PC-3 (cell line): ENCODE measurements at regions of chr17 and their contacts with region 1.

Region 1: GRCh38 chr17:50094753-50095619 is at the start of gene PDK2:
- DNase-seq: peak; percentile 99
- ATAC-seq: peak; percentile 82
- H3K4me3 ChIP-seq: peak within 1 kb of the TSS; percentile 88
- H3K27ac ChIP-seq: peak within 1 kb of the TSS; percentile 20
- H3K4me1 ChIP-seq: peaks cover 14% of the 10 kb centered on the region
- H3K27me3 ChIP-seq: no peaks in the 10 kb centered on the region
- CTCF ChIP-seq: no peak
- total RNA-seq, gene PDK2: 31.9 and 37.6 TPM in 2 replicates

Region 2: GRCh38 chr17:49763735-49764558 is 331.0 kb before region 1 on chr17 and contains the start of gene FAM117A:
- CTCF ChIA-PET with region 1: no interaction called
- POLR2A ChIA-PET with region 1: no interaction called
- intact Hi-C with region 1: no loop called
- DNase-seq: peak; percentile 100
- ATAC-seq: peak; percentile 96
- H3K4me3 ChIP-seq: peak within 1 kb of the TSS; percentile 76
- H3K27ac ChIP-seq: no peak within 1 kb of the TSS
- H3K4me1 ChIP-seq: peaks cover 24% of the 10 kb centered on the region
- H3K27me3 ChIP-seq: 0 out of 2 replicates have a peak, but pooled peaks cover 6% of the 10 kb centered on the region
- CTCF ChIP-seq: no peak
- total RNA-seq, gene FAM117A: 9.7 and 16.3 TPM in 2 replicates

Region 3: DNA sequence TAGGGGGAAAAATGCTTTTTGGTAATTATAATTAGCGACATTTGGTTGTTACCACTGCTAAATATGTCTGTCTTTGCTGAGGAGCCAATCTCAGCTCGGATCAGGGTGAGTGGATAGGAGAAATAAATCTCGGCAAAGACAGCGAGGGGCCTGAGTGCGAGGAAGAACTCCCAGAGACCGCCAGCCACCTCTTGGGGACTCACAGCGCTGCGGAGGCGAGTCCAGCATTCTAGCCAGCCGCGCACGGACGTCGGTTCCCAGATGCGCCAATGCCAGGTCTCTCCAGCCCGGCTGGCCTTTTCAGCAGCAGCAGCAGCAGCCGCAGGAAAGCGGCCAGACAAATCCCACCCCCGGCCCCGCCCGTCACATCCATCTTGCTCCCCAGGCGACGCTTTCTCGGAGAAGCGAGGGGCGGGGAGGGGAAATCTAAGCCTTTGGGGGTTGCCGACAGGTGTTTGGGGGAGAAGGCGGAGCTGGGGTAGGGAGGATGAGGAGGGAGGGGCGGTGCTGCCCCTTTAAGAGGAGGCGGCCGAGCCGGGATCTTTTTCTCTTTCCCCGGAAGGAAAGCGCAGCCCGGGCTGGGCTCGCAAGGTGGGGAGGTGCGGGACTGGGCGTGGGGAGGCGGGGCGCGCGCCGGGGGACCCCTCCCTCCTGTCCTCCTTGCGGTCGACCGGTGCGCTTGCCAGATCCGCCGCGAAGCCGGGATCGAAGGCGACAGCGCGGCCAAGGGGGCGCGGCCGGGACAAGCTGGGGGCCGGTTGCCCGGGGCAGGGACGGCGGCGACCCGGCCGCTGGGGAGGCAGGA is 39.4 kb before region 1 on chr17 and contains the start of gene ITGA3:
- CTCF ChIA-PET with region 1: interaction called, 8 read pairs
- POLR2A ChIA-PET with region 1: interaction called, 4 read pairs
- intact Hi-C with region 1: loop called (anchors 2 kb)
- DNase-seq: peak; percentile 98
- ATAC-seq: peak; percentile 36
- H3K4me3 ChIP-seq: peak within 1 kb of the TSS; percentile 90
- H3K27ac ChIP-seq: peak within 1 kb of the TSS; percentile 96
- H3K4me1 ChIP-seq: peaks cover 79% of the 10 kb centered on the region
- H3K27me3 ChIP-seq: no peaks in the 10 kb centered on the region
- CTCF ChIP-seq: no peak
- total RNA-seq, gene ITGA3: 598 and 763 TPM in 2 replicates

Region 4: GRCh38 chr17:50139950-50140871 is 45.2 kb after region 1 on chr17:
- CTCF ChIA-PET with region 1: no interaction called
- POLR2A ChIA-PET with region 1: interaction called, 24 read pairs
- intact Hi-C with region 1: no loop called
- DNase-seq: peak; percentile 68
- ATAC-seq: peak; percentile 84
- H3K4me3 ChIP-seq: no peak overlapping the region
- H3K27ac ChIP-seq: no peak overlapping the region
- H3K4me1 ChIP-seq: no peaks in the 10 kb centered on the region
- H3K27me3 ChIP-seq: no peaks in the 10 kb centered on the region
- CTCF ChIP-seq: peak; percentile 96

Region 5: GRCh38 chr17:50161023-50161910 is 66.3 kb after region 1 on chr17:
- CTCF ChIA-PET with region 1: no interaction called
- POLR2A ChIA-PET with region 1: no interaction called
- intact Hi-C with region 1: loop called (anchors 1 kb)
- DNase-seq: peak; percentile 95
- ATAC-seq: peak; percentile 98
- H3K4me3 ChIP-seq: peak overlapping the region; percentile 70
- H3K27ac ChIP-seq: no peak overlapping the region
- H3K4me1 ChIP-seq: peaks cover 11% of the 10 kb centered on the region
- H3K27me3 ChIP-seq: no peaks in the 10 kb centered on the region
- CTCF ChIP-seq: peak; percentile 95

Region 6: GRCh38 chr17:50297407-50297865 is 202.4 kb after region 1 on chr17:
- CTCF ChIA-PET with region 1: no interaction called
- POLR2A ChIA-PET with region 1: no interaction called
- intact Hi-C with region 1: loop called (anchors 2 kb)
- DNase-seq: peak; percentile 82
- ATAC-seq: peak; percentile 99
- H3K4me3 ChIP-seq: no peak overlapping the region
- H3K27ac ChIP-seq: no peak overlapping the region
- H3K4me1 ChIP-seq: no peaks in the 10 kb centered on the region
- H3K27me3 ChIP-seq: no peaks in the 10 kb centered on the region
- CTCF ChIP-seq: peak; percentile 96